Activated naive CD4-positive, alpha-beta T cell treated with anti-CD3 and anti-CD28 coated beads, Interleukin-2, amount 10 ng/mL, durations not matched to agents 7 days and 5 days (primary cell): ENCODE measurements at regions of chr10 and their contacts with region 1.

Region 1: DNA sequence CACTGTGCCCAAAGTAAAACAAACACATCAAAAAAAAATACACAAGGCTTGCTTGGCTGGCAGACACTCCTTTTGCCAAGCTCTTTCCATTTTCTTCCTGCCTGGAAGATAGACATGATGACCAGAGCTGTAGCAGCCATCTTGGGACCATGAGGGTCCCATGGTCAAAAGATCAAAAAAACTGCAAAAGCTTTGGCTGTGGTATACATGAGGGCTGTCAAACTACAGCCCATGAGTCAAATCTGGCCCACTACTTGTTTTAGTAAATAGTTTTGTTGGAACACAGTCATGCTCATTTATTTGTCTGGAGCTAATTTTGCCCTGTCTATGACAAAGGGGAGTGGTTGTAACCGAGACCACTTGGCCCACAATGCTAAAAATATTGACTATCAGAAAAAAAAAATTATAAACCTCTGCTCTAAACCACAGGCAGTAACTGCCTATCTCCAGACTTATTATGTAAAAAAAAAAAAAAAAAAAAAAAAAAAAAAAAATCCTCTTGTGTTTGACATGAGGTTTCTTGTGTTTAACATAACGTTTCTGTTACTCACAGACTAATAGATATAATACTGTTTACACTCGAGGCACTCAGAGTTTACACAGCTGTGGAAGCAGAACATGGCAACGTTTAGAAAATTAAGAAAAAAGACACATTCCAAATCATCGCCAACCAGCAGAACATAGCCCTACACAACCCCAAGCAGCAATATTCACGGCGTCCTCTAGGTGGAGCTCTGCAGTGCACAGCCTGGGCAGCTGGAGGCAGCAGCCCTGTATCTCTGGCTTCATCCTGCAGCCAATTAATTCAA is 36.9 kb downstream of the ASB13 start:
- DNase-seq: peak; percentile 91
- H3K4me3 Mint-ChIP-seq: no peak overlapping the region
- H3K27ac Mint-ChIP-seq: no peak overlapping the region
- H3K4me1 Mint-ChIP-seq: peaks cover 19% of the 10 kb centered on the region
- H3K27me3 Mint-ChIP-seq: peaks cover 42% of the 10 kb centered on the region

Region 2: DNA sequence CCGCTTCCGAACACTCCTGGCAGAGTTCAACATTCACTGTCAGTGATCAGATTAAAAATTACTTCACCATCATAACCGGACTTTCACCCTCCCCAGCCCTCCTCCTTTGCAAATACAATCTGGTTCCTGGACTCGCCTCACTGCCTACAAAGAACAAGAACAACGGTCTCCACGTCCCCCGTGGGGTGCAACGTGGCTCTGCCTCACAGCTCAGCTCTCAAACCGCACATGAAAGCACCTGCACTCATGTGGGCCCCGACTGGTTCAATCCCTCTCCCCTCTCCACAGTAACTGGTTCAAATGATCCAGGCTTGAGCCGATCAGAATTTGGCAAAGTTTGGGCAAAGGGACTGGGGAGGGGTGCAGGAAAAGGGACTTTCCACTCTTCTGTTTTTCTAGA is 15.9 kb after region 1 on chr10:
- CTCF ChIA-PET with region 1: interaction called, 17 read pairs
- DNase-seq: no peak
- H3K4me3 Mint-ChIP-seq: no peak overlapping the region
- H3K27ac Mint-ChIP-seq: no peak overlapping the region
- H3K4me1 Mint-ChIP-seq: no peaks in the 10 kb centered on the region
- H3K27me3 Mint-ChIP-seq: no peaks in the 10 kb centered on the region

Region 3: GRCh38 chr10:5655121-5655520 is 25.6 kb after region 1 on chr10:
- CTCF ChIA-PET with region 1: interaction called, 13 read pairs
- DNase-seq: no peak
- H3K4me3 Mint-ChIP-seq: no peak overlapping the region
- H3K27ac Mint-ChIP-seq: no peak overlapping the region
- H3K4me1 Mint-ChIP-seq: peaks cover 39% of the 10 kb centered on the region
- H3K27me3 Mint-ChIP-seq: no peaks in the 10 kb centered on the region

Region 4: GRCh38 chr10:5873515-5873995 is 244.0 kb after region 1 on chr10:
- CTCF ChIA-PET with region 1: interaction called, 12 read pairs
- DNase-seq: peak; percentile 76
- H3K4me3 Mint-ChIP-seq: peak overlapping the region; percentile 32
- H3K27ac Mint-ChIP-seq: no peak overlapping the region
- H3K4me1 Mint-ChIP-seq: peaks cover 3% of the 10 kb centered on the region
- H3K27me3 Mint-ChIP-seq: no peaks in the 10 kb centered on the region